Heart right ventricle (tissue), 16 donors: ENCODE measurements at regions of chr1 and their contacts with region 1.

Region 1: GRCh38 chr1:113835642-113836307 is 23.5 kb upstream of the RSBN1 start:
- DNase-seq: no peak
- ATAC-seq: no peak
- H3K4me3 ChIP-seq: no peak overlapping the region
- H3K27ac ChIP-seq: no peak overlapping the region
- H3K4me1 ChIP-seq: peaks cover 0 to 4% (median 0%) of the 10 kb centered on the region in 9 donors
- H3K27me3 ChIP-seq: peaks cover 0 to 3% (median 0%) of the 10 kb centered on the region in 7 donors
- CTCF ChIP-seq: peak; percentile 47 to 79 (median 66)

Region 2: DNA sequence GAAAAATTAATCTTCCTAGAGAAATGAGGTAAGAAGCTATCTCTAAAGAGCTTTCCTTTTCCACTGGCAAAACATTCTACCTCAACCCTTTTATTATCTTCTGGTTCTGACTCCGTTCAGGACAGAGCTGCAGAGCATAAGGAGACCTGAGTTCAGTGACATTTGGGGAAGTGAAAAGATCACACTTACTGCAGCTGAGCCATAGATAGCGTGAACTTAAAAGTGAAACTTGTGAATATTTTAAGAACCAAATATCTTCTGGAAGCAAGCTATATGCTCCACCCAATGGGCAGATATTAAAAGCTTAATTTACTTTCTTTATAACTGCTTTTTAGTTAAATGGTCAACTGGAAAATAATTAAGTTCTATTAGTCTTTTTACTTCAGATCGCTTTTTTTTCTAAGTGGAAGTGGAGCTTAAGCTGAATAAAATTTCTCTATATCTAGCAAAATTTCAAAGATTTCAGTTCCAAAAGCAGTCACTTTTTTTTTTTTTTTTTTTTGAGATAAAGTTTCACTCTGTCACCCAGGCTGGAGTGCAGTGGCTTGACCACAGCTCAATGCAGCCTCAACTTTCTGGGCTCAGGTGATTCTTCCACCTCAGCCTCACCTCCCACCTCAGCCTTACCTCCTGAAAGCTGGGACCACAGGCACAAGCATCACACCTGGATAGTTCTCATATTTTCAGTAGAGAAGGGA is 23.9 kb after region 1 on chr1:
- intact Hi-C with region 1: no loop called
- DNase-seq: no peak
- ATAC-seq: no peak
- H3K4me3 ChIP-seq: peak overlapping the region in 1 of 10 donors; percentile 16
- H3K27ac ChIP-seq: peak overlapping the region in 1 of 10 donors; percentile 69
- H3K4me1 ChIP-seq: peaks cover 0 to 55% (median 0%) of the 10 kb centered on the region in 9 donors
- H3K27me3 ChIP-seq: peaks cover 0 to 3% (median 0%) of the 10 kb centered on the region in 7 donors
- CTCF ChIP-seq: no peak

Region 3: GRCh38 chr1:113904674-113905434 is 69.1 kb after region 1 on chr1 and contains the starts of genes AP4B1 and DCLRE1B:
- intact Hi-C with region 1: loop called in 7 of 10 experiments (anchors 1 to 10 kb)
- DNase-seq: peak; percentile 98 to 100
- ATAC-seq: peak; percentile 96 to 99 (median 98)
- H3K4me3 ChIP-seq: peak within 1 kb of the TSS; percentile 58 to 86 (median 78)
- H3K27ac ChIP-seq: peak within 1 kb of the TSS; percentile 52 to 95 (median 92)
- H3K4me1 ChIP-seq: peaks cover 0 to 49% (median 24%) of the 10 kb centered on the region in 9 donors
- H3K27me3 ChIP-seq: no peaks in the 10 kb centered on the region
- CTCF ChIP-seq: peak; percentile 37 to 88 (median 71)
- total RNA-seq, gene AP4B1: 9.1 to 13.9 (median 11.5) TPM
- total RNA-seq, gene DCLRE1B: 0.78 to 4.2 (median 2.1) TPM

Region 4: GRCh38 chr1:113928941-113929749 is 93.4 kb after region 1 on chr1 and contains the start of gene HIPK1:
- intact Hi-C with region 1: loop called in 1 of 10 experiments (anchors 10 kb)
- DNase-seq: peak; percentile 94 to 95
- ATAC-seq: peak; percentile 93 to 96 (median 95)
- H3K4me3 ChIP-seq: peak within 1 kb of the TSS; percentile 40 to 97 (median 90)
- H3K27ac ChIP-seq: peak within 1 kb of the TSS; percentile 80 to 97 (median 94)
- H3K4me1 ChIP-seq: peaks cover 2 to 52% (median 42%) of the 10 kb centered on the region in 9 donors
- H3K27me3 ChIP-seq: no peaks in the 10 kb centered on the region
- CTCF ChIP-seq: no peak
- total RNA-seq, gene HIPK1: 42.6 to 91.0 (median 62.2) TPM

Region 5: GRCh38 chr1:113972954-113973353 is 137.2 kb after region 1 on chr1:
- intact Hi-C with region 1: loop called in 3 of 10 experiments (anchors 5 to 10 kb)
- DNase-seq: no peak
- ATAC-seq: no peak
- H3K4me3 ChIP-seq: no peak overlapping the region
- H3K27ac ChIP-seq: no peak overlapping the region
- H3K4me1 ChIP-seq: peaks cover 0 to 31% (median 21%) of the 10 kb centered on the region in 9 donors
- H3K27me3 ChIP-seq: no peaks in the 10 kb centered on the region
- CTCF ChIP-seq: no peak

Region 6: GRCh38 chr1:113978863-113979702 is 143.3 kb after region 1 on chr1 and contains the start of gene OLFML3:
- intact Hi-C with region 1: loop called in 3 of 10 experiments (anchors 5 to 10 kb)
- DNase-seq: peak; percentile 70 to 92
- ATAC-seq: peak; percentile 66 to 83 (median 74)
- H3K4me3 ChIP-seq: peak within 1 kb of the TSS in 9 of 10 donors; percentile 10 to 48 (median 44)
- H3K27ac ChIP-seq: peak within 1 kb of the TSS in 9 of 10 donors; percentile 14 to 76 (median 61)
- H3K4me1 ChIP-seq: peaks cover 0 to 75% (median 69%) of the 10 kb centered on the region in 9 donors
- H3K27me3 ChIP-seq: no peaks in the 10 kb centered on the region
- CTCF ChIP-seq: peak; percentile 40 to 87 (median 74)
- total RNA-seq, gene OLFML3: 6.1 to 19.7 (median 11.0) TPM

Region 7: DNA sequence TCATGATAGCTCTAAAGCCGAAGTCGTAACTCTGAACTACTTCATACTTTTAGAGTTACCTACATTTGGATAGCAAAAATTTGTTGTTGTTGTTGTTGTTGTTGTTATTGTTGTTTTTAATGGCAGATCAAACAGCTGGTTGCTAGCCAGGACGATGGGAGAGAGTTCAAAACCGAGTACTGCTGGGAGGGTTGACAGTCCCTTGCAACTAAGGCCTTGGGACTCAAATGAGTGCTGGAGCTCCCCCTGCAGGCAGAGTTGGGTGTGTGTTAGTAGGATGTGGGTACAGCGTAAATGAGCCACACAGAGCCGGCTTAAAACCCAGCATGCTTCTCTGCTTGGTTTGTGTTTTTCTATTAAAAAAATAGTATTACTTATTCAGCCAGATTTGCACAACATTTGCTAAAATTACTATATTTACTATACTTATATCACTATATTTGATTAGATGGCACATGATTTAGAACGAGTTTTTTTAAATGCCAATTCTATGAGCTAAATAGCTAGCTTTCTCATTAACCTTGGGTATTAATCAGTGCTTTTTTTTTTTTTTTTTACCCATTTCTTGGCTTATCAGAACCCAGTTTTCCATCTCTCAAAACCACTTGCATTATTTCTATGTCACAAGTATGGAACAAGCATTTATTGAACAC is 447.1 kb after region 1 on chr1:
- intact Hi-C with region 1: loop called in 7 of 10 experiments (anchors 5 to 10 kb)
- DNase-seq: peak; percentile 84 to 91
- ATAC-seq: peak; percentile 93 to 98 (median 97)
- H3K4me3 ChIP-seq: no peak overlapping the region
- H3K27ac ChIP-seq: no peak overlapping the region
- H3K4me1 ChIP-seq: peaks cover 0 to 3% (median 0%) of the 10 kb centered on the region in 9 donors
- H3K27me3 ChIP-seq: peaks cover 0 to 4% (median 0%) of the 10 kb centered on the region in 7 donors
- CTCF ChIP-seq: peak; percentile 78 to 93 (median 89)

Region 8: GRCh38 chr1:114299331-114299975 is 463.7 kb after region 1 on chr1:
- intact Hi-C with region 1: loop called in 1 of 10 experiments (anchors 10 kb)
- DNase-seq: no peak
- ATAC-seq: no peak
- H3K4me3 ChIP-seq: no peak overlapping the region
- H3K27ac ChIP-seq: no peak overlapping the region
- H3K4me1 ChIP-seq: no peaks in the 10 kb centered on the region
- H3K27me3 ChIP-seq: peaks cover 0 to 3% (median 0%) of the 10 kb centered on the region in 7 donors
- CTCF ChIP-seq: peak in 1 of 9 donors; percentile 11